Activated CD4-positive, alpha-beta memory T cell treated with anti-CD3 and anti-CD28 coated beads for 36 hours (primary cell): ENCODE measurements at regions of chr1 and their contacts with region 1.

Region 1: GRCh38 chr1:156728597-156729462 is at the start of gene ISG20L2:
- DNase-seq: peak; percentile 98
- H3K4me3 Mint-ChIP-seq: no peak within 1 kb of the TSS
- H3K27ac Mint-ChIP-seq: peak within 1 kb of the TSS; percentile 99
- H3K4me1 Mint-ChIP-seq: peaks cover 23% of the 10 kb centered on the region
- H3K27me3 Mint-ChIP-seq: no peaks in the 10 kb centered on the region
- total RNA-seq, gene ISG20L2: 35.6 to 36.8 TPM

Region 2: DNA sequence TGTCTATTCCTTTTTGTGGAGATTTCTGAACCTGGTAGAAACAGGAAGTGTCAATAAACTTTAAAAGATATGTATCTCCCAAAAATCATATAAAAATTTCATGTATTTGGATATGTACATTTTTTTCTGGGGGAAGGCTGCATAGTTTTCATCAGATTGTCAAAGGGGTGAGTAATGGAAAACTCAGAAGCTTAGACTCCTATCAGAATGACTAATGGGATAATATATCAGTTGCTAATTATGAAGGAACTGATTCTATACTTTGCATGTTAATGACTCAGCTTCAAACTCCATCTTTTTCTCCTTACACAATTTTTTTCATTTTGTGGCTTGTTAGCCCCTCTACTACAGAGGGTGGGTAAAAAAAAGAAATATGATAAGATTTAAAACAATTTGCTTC is 927.7 kb before region 1 on chr1:
- CTCF ChIA-PET with region 1: no interaction called
- POLR2A ChIA-PET with region 1: no interaction called
- intact Hi-C with region 1: no loop called
- DNase-seq: no peak
- H3K4me3 Mint-ChIP-seq: no peak overlapping the region
- H3K27ac Mint-ChIP-seq: peak overlapping the region; percentile 52
- H3K4me1 Mint-ChIP-seq: peaks cover 5% of the 10 kb centered on the region
- H3K27me3 Mint-ChIP-seq: no peaks in the 10 kb centered on the region

Region 3: DNA sequence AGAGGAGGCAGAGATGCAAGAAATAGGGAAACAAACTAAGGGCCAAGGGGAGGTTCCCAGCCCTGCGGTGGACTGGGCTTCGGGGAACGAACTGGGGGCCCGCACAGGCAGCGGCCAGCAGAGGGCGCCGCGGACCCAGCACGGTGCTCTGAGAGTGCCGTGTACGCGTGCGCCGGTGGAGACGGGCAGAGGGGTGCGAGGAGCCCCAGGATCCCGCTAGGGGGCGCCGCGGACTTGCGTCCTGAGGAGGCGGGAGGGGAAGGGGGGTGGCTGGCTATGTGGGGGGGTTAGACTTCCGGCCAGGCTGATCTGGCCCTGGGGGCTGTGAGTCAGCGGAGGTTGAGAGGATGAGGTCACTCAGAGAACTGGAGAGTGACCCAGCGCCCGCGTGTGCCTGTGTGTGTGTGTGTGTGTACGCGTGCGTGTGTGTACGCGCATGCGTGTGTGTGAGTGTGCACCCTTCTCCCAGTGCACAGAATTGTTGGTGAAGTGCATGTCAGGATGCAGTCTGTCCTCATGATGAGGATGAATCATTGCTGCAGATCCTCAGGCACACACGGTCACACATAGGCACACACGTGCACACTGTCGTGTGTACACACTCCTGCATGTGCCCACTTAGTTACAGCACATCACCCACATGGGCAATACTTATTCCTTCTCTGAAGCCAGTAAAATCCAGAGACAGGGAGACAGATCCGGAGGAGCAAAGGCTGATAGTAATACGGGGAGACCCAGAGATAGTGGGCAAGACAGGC is 68.7 kb before region 1 on chr1:
- CTCF ChIA-PET with region 1: interaction called, 52 read pairs
- POLR2A ChIA-PET with region 1: interaction called, 3 read pairs
- intact Hi-C with region 1: loop called (anchors 1 kb)
- DNase-seq: peak; percentile 96
- H3K4me3 Mint-ChIP-seq: peak overlapping the region; percentile 81
- H3K27ac Mint-ChIP-seq: peak overlapping the region; percentile 82
- H3K4me1 Mint-ChIP-seq: peaks cover 37% of the 10 kb centered on the region
- H3K27me3 Mint-ChIP-seq: peaks cover 27% of the 10 kb centered on the region

Region 4: DNA sequence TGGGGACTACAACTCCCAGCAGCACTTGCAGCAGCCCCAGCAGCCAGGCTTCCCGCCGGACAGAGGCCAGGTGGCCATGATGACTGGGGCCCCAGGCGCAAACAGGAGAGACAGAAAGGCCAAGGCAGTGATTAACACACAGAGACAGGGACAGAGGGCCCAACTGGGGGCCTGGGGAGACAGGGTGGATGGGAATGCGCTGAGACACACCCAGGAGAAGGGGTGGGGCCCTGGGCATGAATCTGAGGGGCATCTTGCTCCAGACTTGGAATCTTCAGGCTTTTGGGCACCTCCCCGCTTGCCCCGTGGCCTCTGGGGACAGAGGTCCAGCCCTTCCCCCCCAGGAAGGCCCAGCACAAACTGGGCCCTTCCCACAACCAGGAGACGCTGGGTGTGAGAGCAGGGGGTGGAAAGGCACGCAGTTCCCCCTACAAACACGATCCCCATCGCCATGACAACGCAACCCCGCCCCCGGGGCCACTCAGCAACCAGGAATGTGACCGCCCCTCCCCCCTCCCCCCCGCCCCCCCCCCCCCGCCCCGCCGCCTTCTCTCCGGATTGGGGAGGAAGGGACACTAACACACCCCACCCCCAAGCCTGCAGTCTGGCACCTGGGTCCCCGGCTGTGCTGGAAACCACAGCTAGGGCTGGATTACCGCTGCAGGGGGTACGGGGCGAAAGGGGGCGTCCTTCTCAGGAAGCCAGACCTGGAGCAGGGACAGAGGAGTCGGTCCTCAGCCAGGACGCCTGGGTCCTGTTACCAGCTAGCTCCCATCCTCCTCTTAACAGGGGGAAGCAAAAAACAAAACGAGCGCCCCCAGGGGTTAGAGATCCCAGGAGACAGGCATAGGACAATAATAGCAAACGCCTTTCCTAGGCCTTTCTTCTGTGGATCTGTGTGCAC is 18.1 kb after region 1 on chr1:
- CTCF ChIA-PET with region 1: interaction called, 75 read pairs
- POLR2A ChIA-PET with region 1: interaction called, 90 read pairs
- intact Hi-C with region 1: loop called (anchors 1 kb)
- DNase-seq: peak; percentile 76
- H3K4me3 Mint-ChIP-seq: peak overlapping the region; percentile 93
- H3K27ac Mint-ChIP-seq: peak overlapping the region; percentile 94
- H3K4me1 Mint-ChIP-seq: peaks cover 63% of the 10 kb centered on the region
- H3K27me3 Mint-ChIP-seq: no peaks in the 10 kb centered on the region

Region 5: GRCh38 chr1:156781585-156782186 is 52.9 kb after region 1 on chr1:
- CTCF ChIA-PET with region 1: interaction called, 20 read pairs
- POLR2A ChIA-PET with region 1: interaction called, 3 read pairs
- intact Hi-C with region 1: no loop called
- DNase-seq: no peak
- H3K4me3 Mint-ChIP-seq: no peak overlapping the region
- H3K27ac Mint-ChIP-seq: peak overlapping the region; percentile 24
- H3K4me1 Mint-ChIP-seq: peaks cover 31% of the 10 kb centered on the region
- H3K27me3 Mint-ChIP-seq: no peaks in the 10 kb centered on the region

Region 6: GRCh38 chr1:156821801-156822200 is 93.0 kb after region 1 on chr1:
- CTCF ChIA-PET with region 1: interaction called, 10 read pairs
- POLR2A ChIA-PET with region 1: no interaction called
- intact Hi-C with region 1: no loop called
- DNase-seq: peak; percentile 79
- H3K4me3 Mint-ChIP-seq: no peak overlapping the region
- H3K27ac Mint-ChIP-seq: peak overlapping the region; percentile 75
- H3K4me1 Mint-ChIP-seq: peaks cover 41% of the 10 kb centered on the region
- H3K27me3 Mint-ChIP-seq: no peaks in the 10 kb centered on the region

Region 7: GRCh38 chr1:156927215-156928042 is 198.6 kb after region 1 on chr1:
- CTCF ChIA-PET with region 1: interaction called, 12 read pairs
- POLR2A ChIA-PET with region 1: no interaction called
- intact Hi-C with region 1: loop called (anchors 5 kb)
- DNase-seq: peak; percentile 79
- H3K4me3 Mint-ChIP-seq: no peak overlapping the region
- H3K27ac Mint-ChIP-seq: no peak overlapping the region
- H3K4me1 Mint-ChIP-seq: peaks cover 16% of the 10 kb centered on the region
- H3K27me3 Mint-ChIP-seq: peaks cover 75% of the 10 kb centered on the region